Posterior cingulate gyrus (tissue), 11 donors: ENCODE measurements at regions of chr15 and their contacts with region 1.

Region 1: GRCh38 chr15:88258093-88258641 is 1.6 kb upstream of the NTRK3 start:
- DNase-seq: peak in 8 of 10 donors; percentile 54 to 93 (median 64)

Region 2: DNA sequence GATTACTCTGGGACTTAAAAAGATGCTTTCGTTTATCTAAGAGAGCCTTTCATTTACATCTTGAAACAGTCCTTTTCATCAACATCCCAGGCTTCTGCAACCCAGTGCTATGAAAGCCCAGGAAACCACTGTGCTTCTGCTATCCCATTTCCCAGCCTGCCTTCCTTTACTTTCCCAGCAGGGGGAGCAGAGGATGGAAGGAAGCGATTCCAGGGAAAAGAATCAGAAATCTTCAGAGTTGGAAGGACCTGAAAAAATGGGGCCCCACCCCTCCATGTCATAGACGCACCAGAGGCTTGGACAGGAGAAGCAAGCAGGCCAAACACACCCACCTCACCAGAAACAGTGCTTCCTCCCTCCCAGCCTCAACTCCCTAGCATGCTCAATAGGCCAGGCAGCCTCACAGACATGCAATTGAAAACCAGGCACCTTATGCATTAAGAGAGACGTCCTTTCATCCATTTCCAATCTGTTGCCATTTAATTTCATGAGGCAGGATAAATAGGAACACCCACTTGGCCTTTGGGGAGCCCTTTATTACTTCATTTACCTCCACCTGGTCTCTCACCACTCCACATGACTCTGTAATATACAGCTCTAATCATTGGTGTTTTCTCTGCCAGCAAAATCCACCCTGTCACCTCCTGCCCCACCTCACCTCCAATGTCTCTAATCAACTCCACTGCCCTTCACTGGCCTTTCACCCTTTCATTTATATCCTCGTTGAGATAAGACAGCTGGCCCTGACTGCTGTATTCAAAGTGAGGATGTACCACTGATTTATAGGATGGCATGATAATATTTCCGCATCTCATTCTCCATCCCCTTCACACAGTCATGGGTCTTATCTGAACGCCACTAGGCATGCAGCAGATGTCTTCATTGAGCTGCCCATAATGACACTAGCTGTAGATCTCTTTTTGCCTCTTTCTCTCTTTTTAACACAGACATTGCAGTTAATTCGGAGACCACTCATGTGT is 585.6 kb before region 1 on chr15:
- intact Hi-C with region 1: loop called (anchors 10 kb)
- DNase-seq: peak in 7 of 10 donors; percentile 16 to 87 (median 44)

Region 3: GRCh38 chr15:88077296-88078020 is 180.7 kb before region 1 on chr15:
- intact Hi-C with region 1: no loop called
- DNase-seq: no peak

Region 4: DNA sequence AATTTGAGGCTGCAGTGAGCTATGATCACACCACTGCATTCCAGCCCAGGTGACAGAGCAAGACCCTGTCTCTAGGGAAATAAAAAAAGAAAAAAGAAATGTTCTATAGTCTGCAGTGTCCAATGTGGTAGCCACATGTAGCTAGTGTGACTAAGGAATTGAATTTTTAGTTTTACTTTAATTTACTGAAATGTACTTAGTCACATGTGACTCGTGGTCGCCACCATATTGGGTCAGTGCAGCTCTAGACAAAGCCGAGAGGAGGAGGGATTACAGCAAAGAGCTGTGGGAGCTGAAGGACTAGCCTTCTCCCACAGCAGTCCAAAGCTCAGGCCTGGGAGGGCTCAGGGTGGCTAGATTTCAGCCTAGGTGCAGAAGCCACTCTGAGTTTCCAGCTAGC is 64.3 kb after region 1 on chr15:
- intact Hi-C with region 1: no loop called
- DNase-seq: no peak

Region 5: DNA sequence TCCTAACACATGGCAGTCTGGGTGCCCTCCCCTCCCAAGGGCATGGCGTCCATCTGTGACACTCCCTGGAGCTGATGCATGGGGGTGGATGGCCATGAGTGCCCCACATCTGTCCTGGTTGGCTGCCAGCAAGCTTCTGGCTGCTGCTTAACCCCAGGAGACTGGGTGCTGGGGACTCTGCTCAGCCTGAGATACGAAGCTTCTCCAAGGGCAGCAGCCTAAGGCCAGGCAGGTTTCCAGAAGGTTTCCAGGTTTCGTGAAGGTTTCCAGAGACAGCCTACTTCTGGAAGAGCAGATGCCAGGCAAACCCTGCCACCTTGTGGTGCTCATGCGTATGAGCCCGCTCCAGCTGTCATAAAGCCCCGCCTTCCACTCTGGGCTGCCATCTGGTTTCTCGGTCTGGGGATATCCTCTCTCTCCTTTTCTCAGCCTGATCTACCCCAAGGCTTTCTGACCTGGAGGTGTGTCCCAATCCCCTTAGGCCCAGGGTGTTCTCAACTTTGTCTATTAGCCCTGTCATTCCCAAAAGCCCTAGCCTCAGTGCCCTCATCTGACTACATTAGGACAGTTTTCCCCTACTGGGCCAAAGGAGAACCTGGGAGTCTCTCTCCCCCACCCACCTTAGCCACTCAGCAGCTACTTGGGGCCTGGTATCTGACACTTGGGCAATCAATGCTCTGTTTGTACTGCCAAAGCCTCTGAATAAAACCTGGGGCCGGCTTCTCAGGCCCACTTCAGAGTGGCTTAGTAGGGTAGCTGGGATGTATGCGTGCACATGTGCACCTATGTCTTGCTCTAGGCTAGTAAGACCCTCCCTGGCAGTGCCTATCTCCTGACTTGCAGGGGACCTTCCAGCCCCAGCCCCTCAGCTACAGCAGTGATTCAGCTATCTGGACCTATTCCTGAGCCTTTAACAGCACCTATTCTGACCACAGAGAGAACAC is 197.0 kb after region 1 on chr15:
- intact Hi-C with region 1: loop called (anchors 5 kb)
- DNase-seq: peak; percentile 42 to 95 (median 68)

Region 6: GRCh38 chr15:88467073-88467934 is 209.1 kb after region 1 on chr15 and contains the starts of genes MRPL46 and MRPS11:
- intact Hi-C with region 1: loop called (anchors 5 kb)
- DNase-seq: peak; percentile 87 to 98 (median 93)